ENCODE measurements at regions of chr20 and their contacts with region 1.

Region 1: GRCh38 chr20:58309575-58310290 is at the start of gene RAB22A:
- DNase-seq: peak; percentile 81 to 87 (median 87)
- ATAC-seq: peak; percentile 95
- H3K4me3 ChIP-seq: peak within 1 kb of the TSS; percentile 92
- H3K4me1 ChIP-seq: peaks cover 25% of the 10 kb centered on the region
- CTCF ChIP-seq: no peak
- total RNA-seq, gene RAB22A: 20.2 to 27.3 (median 21.0) TPM

Region 2: GRCh38 chr20:58038202-58038823 is 271.4 kb before region 1 on chr20:
- intact Hi-C with region 1: no loop called
- DNase-seq: no peak
- ATAC-seq: no peak
- H3K4me3 ChIP-seq: no peak overlapping the region
- H3K4me1 ChIP-seq: no peaks in the 10 kb centered on the region
- CTCF ChIP-seq: no peak

Region 3: DNA sequence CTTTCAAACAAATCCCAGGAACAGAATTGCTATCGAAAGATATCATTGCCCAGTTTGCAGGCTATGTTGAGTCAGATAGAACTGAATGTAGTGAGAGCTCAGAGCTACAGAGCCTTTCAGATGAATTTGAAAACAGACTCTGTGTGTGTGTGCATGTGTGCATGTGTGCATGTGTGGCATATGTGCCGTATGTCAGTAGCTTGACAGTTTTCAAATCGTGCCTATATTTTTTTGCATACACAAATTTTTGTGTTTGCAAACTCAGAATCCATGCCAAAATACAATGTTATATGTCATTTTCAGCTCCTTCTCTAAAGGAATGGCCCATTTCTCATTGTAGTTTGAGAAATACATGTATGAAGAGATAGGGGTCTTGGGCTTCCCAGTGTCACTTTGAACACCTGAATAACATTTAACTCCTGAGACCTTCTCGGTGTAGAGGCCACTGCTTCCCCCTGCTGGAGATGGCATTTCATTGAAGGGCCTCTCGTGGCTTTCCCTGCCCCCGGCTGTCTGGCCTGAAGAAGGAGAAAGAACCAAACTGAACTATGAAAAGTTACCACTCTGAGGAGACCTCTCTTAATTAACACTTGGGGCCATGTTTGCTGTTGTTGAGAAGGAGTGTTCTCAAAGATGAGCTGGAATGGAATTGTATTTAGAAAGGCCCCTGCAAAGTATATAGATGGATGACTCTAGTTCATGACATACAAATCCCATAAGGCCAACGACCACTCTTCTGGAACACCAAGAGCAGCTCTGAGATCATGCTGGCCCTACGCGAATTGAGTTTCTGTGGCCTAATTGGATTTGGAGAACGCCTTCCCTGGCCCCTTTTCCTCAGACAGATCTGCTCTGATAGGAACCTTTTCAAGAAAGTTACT is 138.0 kb after region 1 on chr20:
- intact Hi-C with region 1: loop called in 1 of 2 experiments (anchors 5 kb)
- DNase-seq: peak in 2 of 3 donors; percentile 62 to 73
- ATAC-seq: peak; percentile 77
- H3K4me3 ChIP-seq: no peak overlapping the region
- H3K4me1 ChIP-seq: peaks cover 6% of the 10 kb centered on the region
- CTCF ChIP-seq: peak; percentile 14

Region 4: GRCh38 chr20:58921564-58921963 is 611.8 kb after region 1 on chr20:
- intact Hi-C with region 1: no loop called
- DNase-seq: no peak
- ATAC-seq: no peak
- H3K4me3 ChIP-seq: no peak overlapping the region
- H3K4me1 ChIP-seq: no peaks in the 10 kb centered on the region
- CTCF ChIP-seq: no peak

Measured in mucosa of descending colon (tissue), 3 donors.